ENCODE measurements at regions of chr1 and their contacts with region 1.

Region 1: DNA sequence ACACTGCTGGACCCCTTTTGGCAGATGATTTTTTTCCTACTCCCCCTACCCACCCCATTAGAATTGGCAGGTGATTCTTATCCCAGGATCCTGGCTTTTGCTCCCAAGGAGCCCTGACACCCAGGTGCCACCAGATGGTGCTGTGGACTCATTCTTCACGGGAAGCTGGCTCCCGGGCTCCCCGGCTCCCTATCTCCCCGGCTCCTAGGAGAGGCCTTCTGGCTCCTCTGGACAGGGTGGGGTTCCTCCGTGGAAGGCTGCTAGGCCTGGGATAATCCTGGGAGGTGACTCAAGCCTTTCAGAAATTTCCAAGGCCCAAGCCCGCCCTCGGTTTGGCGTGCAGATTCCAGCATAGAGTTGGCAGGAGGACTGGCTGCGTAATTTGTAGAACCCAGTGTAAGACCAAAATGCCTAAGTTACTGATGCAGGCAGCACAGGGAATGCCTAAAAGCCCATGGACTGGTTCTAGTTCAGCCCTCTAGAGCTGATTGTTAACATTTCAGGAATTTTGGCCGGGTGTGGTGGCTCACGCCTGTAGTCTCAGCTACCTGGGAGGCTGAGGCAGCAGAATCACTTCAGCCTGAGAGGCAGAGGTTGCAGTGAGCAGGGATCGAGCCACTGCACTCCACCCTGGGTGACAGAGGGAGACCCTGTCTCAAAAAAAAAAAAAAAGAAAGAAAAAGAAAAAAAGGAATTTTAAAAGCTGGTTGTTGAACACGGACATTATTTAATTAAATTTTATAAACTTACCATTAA is 6.8 kb upstream of the BSDC1 start:
- DNase-seq: peak; percentile 90 to 92 (median 91)
- ATAC-seq: peak; percentile 96
- H3K4me3 ChIP-seq: no peak overlapping the region
- H3K27ac ChIP-seq: no peak overlapping the region
- H3K4me1 ChIP-seq: peaks cover 11 to 18% of the 10 kb centered on the region in 2 experiments; a peak in 4 of 5 replicates
- H3K27me3 ChIP-seq: no peaks in the 10 kb centered on the region
- CTCF ChIP-seq: peak; percentile 90 to 98 (median 96)
- EP300 ChIP-seq: no peak
- POLR2A ChIP-seq: no peak
- RAD21 ChIP-seq: peak; percentile 88 to 92

Region 2: DNA sequence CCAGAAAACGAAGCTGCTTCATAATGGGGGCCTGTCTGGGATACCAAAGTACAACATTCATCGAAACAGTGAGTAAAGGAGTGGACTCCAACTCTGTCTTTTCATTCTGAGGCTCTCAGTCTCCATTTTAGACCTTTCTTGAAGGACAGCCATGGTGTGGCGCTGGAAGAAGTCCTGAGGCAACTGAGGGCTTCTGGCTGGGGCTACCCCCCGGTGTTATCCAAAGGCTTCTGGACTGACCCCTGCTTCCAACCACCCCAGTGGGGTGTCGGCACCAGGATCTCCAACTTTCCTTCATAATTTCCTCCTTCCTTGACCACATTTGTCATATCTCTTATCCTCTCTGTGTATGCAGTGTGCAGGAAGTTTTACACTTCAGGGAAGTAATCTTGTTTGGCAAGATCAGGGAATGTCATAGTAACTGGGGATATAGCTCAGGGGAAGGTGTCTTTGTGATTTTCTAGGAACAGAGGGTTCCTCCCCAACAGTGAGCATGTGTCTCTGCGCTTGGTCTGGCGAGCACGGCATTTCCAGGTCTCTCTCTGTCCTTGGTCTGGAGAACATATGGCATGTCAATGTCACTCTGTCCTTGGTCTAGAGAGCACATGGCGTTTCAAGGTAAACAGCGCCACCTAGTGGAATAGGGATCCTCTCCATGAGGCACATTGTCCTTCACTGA is 12.6 kb after region 1 on chr1:
- CTCF ChIA-PET with region 1: interaction called, 20 read pairs
- POLR2A ChIA-PET with region 1: interaction called, 10 read pairs
- in situ Hi-C with region 1: no loop called
- intact Hi-C with region 1: loop called (anchors 1 kb)
- DNase-seq: peak; percentile 80 to 96 (median 82)
- ATAC-seq: peak; percentile 99
- H3K4me3 ChIP-seq: no peak overlapping the region
- H3K27ac ChIP-seq: peak overlapping the region; percentile 69
- H3K4me1 ChIP-seq: peaks cover 0 to 7% of the 10 kb centered on the region in 2 experiments; a peak in 3 of 5 replicates
- H3K27me3 ChIP-seq: no peaks in the 10 kb centered on the region
- CTCF ChIP-seq: peak; percentile 87 to 98 (median 93)
- EP300 ChIP-seq: no peak
- POLR2A ChIP-seq: no peak
- RAD21 ChIP-seq: peak; percentile 93 to 99

Region 3: GRCh38 chr1:32702599-32703478 is 301.8 kb after region 1 on chr1 and contains the start of gene SYNC:
- CTCF ChIA-PET with region 1: no interaction called
- POLR2A ChIA-PET with region 1: no interaction called
- in situ Hi-C with region 1: no loop called
- intact Hi-C with region 1: loop called (anchors 5 kb)
- DNase-seq: peak; percentile 92 to 99 (median 96)
- ATAC-seq: peak; percentile 97
- H3K4me3 ChIP-seq: peak within 1 kb of the TSS; percentile 59
- H3K27ac ChIP-seq: peak within 1 kb of the TSS; percentile 49; the same call in 2 of the 3 replicates
- H3K4me1 ChIP-seq: peaks cover 9 to 30% of the 10 kb centered on the region in 2 experiments; a peak in 4 of 5 replicates
- H3K27me3 ChIP-seq: no peaks in the 10 kb centered on the region
- CTCF ChIP-seq: no peak; a peak in 1 of 6 replicates
- EP300 ChIP-seq: no peak; the same call in 1 of the 2 replicates
- POLR2A ChIP-seq: peak; percentile 61
- RAD21 ChIP-seq: no peak
- polyA plus RNA-seq, gene SYNC: 0.49 to 0.74 TPM

Region 4: DNA sequence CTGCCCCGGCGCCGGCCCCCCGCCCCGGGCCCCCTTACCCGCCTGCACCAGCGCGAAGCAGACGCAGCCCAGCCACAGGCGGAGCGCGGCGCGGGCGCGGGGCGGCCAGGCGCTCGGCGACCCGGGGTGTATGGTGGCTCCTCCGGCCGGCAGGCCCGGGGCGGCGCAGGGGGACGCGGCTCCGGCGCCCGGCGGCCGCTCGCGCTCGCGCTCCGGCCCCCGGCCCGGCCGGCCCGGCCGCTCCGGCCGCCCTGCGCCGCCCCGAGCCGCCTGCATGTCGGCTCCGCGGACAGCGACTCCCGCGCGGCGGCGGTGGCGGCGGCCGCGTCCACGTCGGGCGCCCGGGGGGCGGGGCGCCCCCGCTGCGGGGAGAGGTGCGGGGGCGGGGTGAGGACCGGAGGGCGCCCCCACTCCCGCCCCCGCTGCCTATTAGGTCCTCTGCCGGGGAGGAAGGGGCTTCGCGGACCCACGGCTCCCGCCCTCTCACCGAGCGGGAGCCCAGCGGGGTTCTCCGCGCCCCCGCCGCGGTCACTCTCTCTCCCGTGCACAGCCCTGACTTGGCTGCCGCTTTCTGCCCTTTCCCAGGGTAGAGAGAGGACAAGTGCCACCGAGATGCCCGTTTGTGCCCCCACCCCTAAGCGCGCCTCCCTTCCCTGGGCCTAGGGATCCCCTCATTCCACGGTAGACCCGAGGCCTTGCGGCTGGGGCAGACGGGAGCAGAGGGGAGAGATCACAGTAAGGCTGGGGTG is 469.7 kb after region 1 on chr1 and contains the start of gene FNDC5:
- CTCF ChIA-PET with region 1: interaction called, 5 read pairs
- POLR2A ChIA-PET with region 1: no interaction called
- in situ Hi-C with region 1: no loop called
- intact Hi-C with region 1: loop called (anchors 5 kb)
- DNase-seq: peak; percentile 37 to 86 (median 72)
- ATAC-seq: peak; percentile 80
- H3K4me3 ChIP-seq: peak within 1 kb of the TSS; percentile 28
- H3K27ac ChIP-seq: no peak within 1 kb of the TSS
- H3K4me1 ChIP-seq: peaks cover 5 to 16% of the 10 kb centered on the region in 2 experiments; a peak in 4 of 5 replicates
- H3K27me3 ChIP-seq: peaks cover 4 to 20% of the 10 kb centered on the region in 2 experiments; a peak in 3 of 5 replicates
- CTCF ChIP-seq: no peak
- EP300 ChIP-seq: no peak
- POLR2A ChIP-seq: no peak
- RAD21 ChIP-seq: no peak
- polyA plus RNA-seq, gene FNDC5: 0.06 to 0.10 TPM

Region 5: DNA sequence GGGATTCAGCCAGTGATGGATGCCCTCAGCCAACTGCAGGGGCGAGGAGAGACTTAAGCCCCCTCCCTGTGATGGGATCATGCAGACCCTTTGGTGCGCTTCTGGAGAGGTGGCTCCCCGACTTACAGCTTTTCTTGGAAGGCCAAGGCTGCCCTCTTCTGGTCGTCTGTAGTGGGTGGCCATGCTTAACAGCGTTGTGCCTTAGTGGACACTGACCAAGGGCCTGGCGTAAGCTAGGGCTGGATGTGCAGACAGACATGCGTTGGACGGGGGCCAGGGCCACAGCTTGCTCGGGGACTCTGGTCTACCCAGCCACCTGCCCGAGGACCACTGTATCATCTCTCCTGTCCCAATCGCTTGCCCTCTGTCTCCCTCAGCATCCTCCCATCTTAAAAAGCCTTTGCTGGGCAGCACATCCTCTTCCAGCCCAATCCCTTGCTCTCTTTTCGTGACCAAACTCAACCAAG is 685.4 kb after region 1 on chr1:
- CTCF ChIA-PET with region 1: no interaction called
- POLR2A ChIA-PET with region 1: no interaction called
- in situ Hi-C with region 1: no loop called
- intact Hi-C with region 1: loop called (anchors 5 kb)
- DNase-seq: peak; percentile 56 to 85 (median 60)
- ATAC-seq: peak; percentile 95
- H3K4me3 ChIP-seq: no peak overlapping the region
- H3K27ac ChIP-seq: no peak overlapping the region
- H3K4me1 ChIP-seq: peaks cover 6 to 7% of the 10 kb centered on the region in 2 experiments; a peak in 3 of 5 replicates
- H3K27me3 ChIP-seq: peaks cover 23 to 50% of the 10 kb centered on the region in 2 experiments; a peak in 4 of 5 replicates
- CTCF ChIP-seq: peak; percentile 87 to 92 (median 90)
- EP300 ChIP-seq: no peak
- POLR2A ChIP-seq: no peak
- RAD21 ChIP-seq: peak; percentile 88 to 95